ENCODE measurements at regions of chr6 and their contacts with region 1.

Region 1: DNA sequence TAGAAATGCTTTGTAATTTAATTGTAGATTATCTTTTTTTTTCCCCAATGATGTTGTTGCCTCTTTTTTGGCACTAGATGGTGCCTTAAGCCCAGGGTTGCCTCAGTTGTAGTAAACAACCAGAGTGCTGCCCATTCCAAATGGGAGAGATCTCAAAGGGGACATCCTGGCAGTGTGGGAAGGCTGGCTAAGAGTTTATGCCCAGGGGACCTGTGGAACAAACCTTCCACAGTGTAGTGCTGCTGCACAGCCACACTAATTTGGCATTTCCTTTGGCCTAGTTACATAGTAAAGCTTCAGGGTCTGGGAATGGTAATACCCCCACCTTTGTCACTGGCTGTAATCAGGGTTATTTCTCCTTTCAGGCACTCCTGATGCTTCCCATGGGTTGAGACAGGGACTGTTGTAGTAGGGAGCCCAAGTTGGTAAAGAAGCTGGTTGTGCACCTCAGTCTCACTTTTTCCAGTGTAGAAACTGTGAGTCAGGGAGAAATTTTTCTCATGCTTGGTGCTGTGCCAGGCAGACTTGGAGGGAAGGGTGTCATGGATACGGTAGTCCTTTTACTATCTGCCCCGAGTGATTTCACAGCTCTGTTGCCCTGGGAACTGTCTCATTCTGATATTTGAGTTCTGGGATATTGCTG is 177.8 kb upstream of the ECI2 start:
- DNase-seq: peak; percentile 79 to 83
- H3K4me3 ChIP-seq: no peak overlapping the region
- H3K27ac ChIP-seq: peak overlapping the region; percentile 91
- H3K4me1 ChIP-seq: peaks cover 28% of the 10 kb centered on the region
- H3K27me3 ChIP-seq: no peaks in the 10 kb centered on the region
- CTCF ChIP-seq: peak; percentile 67

Region 2: DNA sequence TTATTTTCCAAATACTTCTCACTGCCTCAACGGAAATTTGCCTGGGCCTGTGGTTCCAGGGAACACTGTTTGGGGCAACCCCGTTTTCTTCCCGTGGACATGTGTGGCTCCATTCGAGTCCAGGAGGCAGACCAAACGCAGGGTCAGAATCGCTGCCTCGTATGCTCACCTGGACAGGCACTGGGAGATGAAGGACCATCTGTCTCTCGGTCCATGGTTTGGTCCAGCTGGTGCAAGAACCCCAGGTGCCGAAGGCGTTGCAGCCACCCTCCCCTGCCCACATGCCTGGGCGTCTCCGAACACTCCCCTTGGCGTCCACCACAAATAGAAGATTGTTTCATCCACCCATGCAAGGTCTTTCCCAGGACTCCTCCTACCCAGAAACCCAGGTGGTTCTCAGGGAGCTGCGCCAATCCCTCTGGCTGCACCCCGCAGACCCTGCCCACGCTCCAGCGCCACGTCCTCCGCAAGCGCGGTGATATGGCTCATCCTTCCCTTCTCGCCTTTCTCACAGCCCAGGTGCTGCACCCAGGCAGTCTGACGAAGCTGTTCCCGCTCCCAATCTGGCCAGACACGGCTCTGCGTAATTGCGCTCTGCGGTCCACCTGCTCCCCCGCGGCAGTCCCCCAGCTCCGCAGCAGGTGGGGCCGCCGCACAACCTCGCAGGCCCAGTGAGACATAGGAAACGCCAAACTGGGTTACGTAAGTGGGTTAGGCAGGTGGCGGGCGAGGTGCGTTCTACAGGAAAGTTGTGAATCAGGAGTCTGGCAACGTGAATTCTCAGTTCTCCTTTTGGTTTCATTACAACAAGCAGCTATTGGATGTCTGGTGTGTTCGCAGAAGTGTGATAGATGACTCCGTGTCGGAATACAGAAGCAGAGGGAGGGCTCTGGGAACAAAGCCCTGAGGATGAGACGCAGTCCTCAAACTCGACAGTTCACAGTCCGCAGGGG is 31.5 kb before region 1 on chr6:
- CTCF ChIA-PET with region 1: no interaction called
- POLR2A ChIA-PET with region 1: interaction called, 13 read pairs
- intact Hi-C with region 1: loop called (anchors 2 kb)
- DNase-seq: peak; percentile 70 to 80
- H3K4me3 ChIP-seq: peak overlapping the region; percentile 54
- H3K27ac ChIP-seq: no peak overlapping the region
- H3K4me1 ChIP-seq: peaks cover 17% of the 10 kb centered on the region
- H3K27me3 ChIP-seq: no peaks in the 10 kb centered on the region
- CTCF ChIP-seq: peak; percentile 51

Region 3: GRCh38 chr6:4459052-4459451 is 145.9 kb after region 1 on chr6:
- CTCF ChIA-PET with region 1: no interaction called
- POLR2A ChIA-PET with region 1: no interaction called
- intact Hi-C with region 1: loop called (anchors 10 kb)
- DNase-seq: peak; percentile 43 to 80
- H3K4me3 ChIP-seq: no peak overlapping the region
- H3K27ac ChIP-seq: peak overlapping the region; percentile 27; the same call in 1 of the 2 replicates
- H3K4me1 ChIP-seq: peaks cover 6% of the 10 kb centered on the region
- H3K27me3 ChIP-seq: no peaks in the 10 kb centered on the region
- CTCF ChIP-seq: no peak

Region 4: DNA sequence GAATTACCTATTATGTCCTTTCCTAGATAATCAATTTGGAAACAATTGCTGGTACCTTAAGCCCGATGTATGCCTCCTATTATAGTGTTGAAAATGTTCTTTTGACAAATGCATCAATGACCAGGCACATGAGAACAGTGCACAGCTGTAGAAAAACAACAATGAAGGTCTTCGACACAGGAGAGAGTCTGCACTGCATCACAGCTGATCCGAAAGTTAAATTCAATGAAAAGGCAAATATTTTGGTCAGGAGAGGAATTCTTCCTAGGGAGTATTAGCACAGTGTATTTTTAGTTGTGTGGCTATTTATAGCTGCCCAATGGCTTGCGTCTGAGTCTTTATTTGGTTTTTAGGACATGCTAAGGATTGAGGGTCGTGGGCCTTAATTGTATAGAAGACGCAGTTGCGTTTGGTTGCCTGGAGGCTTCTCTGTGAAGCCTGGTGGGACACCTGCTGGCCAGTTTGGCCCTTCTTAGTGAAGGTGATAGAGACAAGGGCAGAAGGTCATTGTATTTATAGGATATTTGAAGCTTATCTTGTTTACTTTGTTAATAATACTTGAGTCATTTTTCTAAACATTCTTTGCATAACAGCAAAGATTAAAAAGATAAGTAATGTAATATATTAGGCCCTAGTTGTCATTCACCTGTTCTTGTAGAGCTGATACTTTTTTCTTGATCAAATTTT is 535.4 kb after region 1 on chr6:
- CTCF ChIA-PET with region 1: no interaction called
- POLR2A ChIA-PET with region 1: no interaction called
- intact Hi-C with region 1: loop called (anchors 5 kb)
- DNase-seq: peak; percentile 38 to 74
- H3K4me3 ChIP-seq: no peak overlapping the region
- H3K27ac ChIP-seq: no peak overlapping the region
- H3K4me1 ChIP-seq: peaks cover 14% of the 10 kb centered on the region
- H3K27me3 ChIP-seq: no peaks in the 10 kb centered on the region
- CTCF ChIP-seq: peak; percentile 64

Region 5: GRCh38 chr6:5030596-5031136 is 717.5 kb after region 1 on chr6:
- CTCF ChIA-PET with region 1: no interaction called
- POLR2A ChIA-PET with region 1: no interaction called
- intact Hi-C with region 1: loop called (anchors 5 kb)
- DNase-seq: peak in 1 of 2 experiments; percentile 70
- H3K4me3 ChIP-seq: no peak overlapping the region
- H3K27ac ChIP-seq: no peak overlapping the region
- H3K4me1 ChIP-seq: peaks cover 11% of the 10 kb centered on the region; the same call in 1 of the 2 replicates
- H3K27me3 ChIP-seq: no peaks in the 10 kb centered on the region
- CTCF ChIP-seq: peak; percentile 40; the same call in 1 of the 2 replicates